Activated B cell treated with CpG ODN at 0.5 μM for 24 hours (primary cell): ENCODE measurements at regions of chr1 and their contacts with region 1.

Region 1: GRCh38 chr1:109584766-109585165 is 34.6 kb downstream of the GNAT2 start:
- DNase-seq: no peak
- ATAC-seq: no peak
- H3K4me3 Mint-ChIP-seq: no peak overlapping the region
- H3K27ac Mint-ChIP-seq: no peak overlapping the region
- H3K4me1 Mint-ChIP-seq: no peaks in the 10 kb centered on the region
- H3K27me3 Mint-ChIP-seq: no peaks in the 10 kb centered on the region
- CTCF ChIP-seq: no peak

Region 2: GRCh38 chr1:109570417-109570827 is 14.3 kb before region 1 on chr1:
- CTCF ChIA-PET with region 1: no interaction called
- POLR2A ChIA-PET with region 1: no interaction called
- intact Hi-C with region 1: loop called (anchors 2 kb)
- DNase-seq: no peak
- ATAC-seq: no peak
- H3K4me3 Mint-ChIP-seq: no peak overlapping the region
- H3K27ac Mint-ChIP-seq: no peak overlapping the region
- H3K4me1 Mint-ChIP-seq: peaks cover 34% of the 10 kb centered on the region
- H3K27me3 Mint-ChIP-seq: no peaks in the 10 kb centered on the region
- CTCF ChIP-seq: no peak

Region 3: GRCh38 chr1:109598655-109599054 is 13.9 kb after region 1 on chr1:
- CTCF ChIA-PET with region 1: no interaction called
- POLR2A ChIA-PET with region 1: no interaction called
- intact Hi-C with region 1: loop called (anchors 2 kb)
- DNase-seq: no peak
- ATAC-seq: no peak
- H3K4me3 Mint-ChIP-seq: no peak overlapping the region
- H3K27ac Mint-ChIP-seq: no peak overlapping the region
- H3K4me1 Mint-ChIP-seq: no peaks in the 10 kb centered on the region
- H3K27me3 Mint-ChIP-seq: no peaks in the 10 kb centered on the region
- CTCF ChIP-seq: no peak